ENCODE measurements at regions of chr1 and their contacts with region 1.

Region 1: GRCh38 chr1:183915625-183916510 is 110.9 kb downstream of the RGL1 start:
- DNase-seq: peak; percentile 97
- H3K4me3 ChIP-seq: no peak overlapping the region
- H3K27ac ChIP-seq: peak overlapping the region; percentile 59
- H3K4me1 ChIP-seq: peaks cover 32% of the 10 kb centered on the region
- H3K27me3 ChIP-seq: no peaks in the 10 kb centered on the region
- CTCF ChIP-seq: peak; percentile 68 to 74
- POLR2A ChIP-seq: peak; percentile 54

Region 2: GRCh38 chr1:183471743-183472487 is 444.0 kb before region 1 on chr1:
- CTCF ChIA-PET with region 1: no interaction called
- POLR2A ChIA-PET with region 1: no interaction called
- dilution Hi-C with region 1: no loop called
- intact Hi-C with region 1: loop called (anchors 1 kb)
- DNase-seq: peak; percentile 96
- H3K4me3 ChIP-seq: peak overlapping the region; percentile 62 to 91 (median 89)
- H3K27ac ChIP-seq: peak overlapping the region; percentile 90
- H3K4me1 ChIP-seq: peaks cover 19% of the 10 kb centered on the region
- H3K27me3 ChIP-seq: no peaks in the 10 kb centered on the region
- CTCF ChIP-seq: peak in 1 of 2 donors; percentile 11
- POLR2A ChIP-seq: no peak

Region 3: DNA sequence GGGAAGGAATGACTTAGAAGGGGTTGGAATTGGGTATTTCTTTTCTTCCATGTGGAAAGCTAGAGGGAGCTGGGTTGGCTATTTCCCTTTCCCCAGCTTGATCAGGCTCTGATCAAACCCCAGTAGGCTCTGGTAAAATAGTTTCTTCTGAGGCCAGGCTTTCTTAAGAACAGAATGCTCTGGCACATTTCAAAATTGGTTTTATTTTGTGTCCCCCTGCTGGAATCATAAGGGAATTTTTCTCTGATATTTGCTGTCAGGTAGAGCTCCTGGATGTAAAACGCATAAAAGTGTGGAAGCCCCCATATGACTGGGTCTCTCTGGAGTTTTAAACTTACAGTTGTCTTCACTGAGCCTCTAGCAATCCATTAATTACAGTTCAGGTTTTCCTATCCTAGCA is 245.7 kb before region 1 on chr1:
- CTCF ChIA-PET with region 1: interaction called, 15 read pairs
- POLR2A ChIA-PET with region 1: no interaction called
- dilution Hi-C with region 1: no loop called
- intact Hi-C with region 1: no loop called
- DNase-seq: no peak
- H3K4me3 ChIP-seq: no peak overlapping the region
- H3K27ac ChIP-seq: no peak overlapping the region
- H3K4me1 ChIP-seq: no peaks in the 10 kb centered on the region
- H3K27me3 ChIP-seq: no peaks in the 10 kb centered on the region
- CTCF ChIP-seq: peak in 1 of 2 donors; percentile 5
- POLR2A ChIP-seq: no peak

Region 4: GRCh38 chr1:183757061-183757460 is 158.8 kb before region 1 on chr1:
- CTCF ChIA-PET with region 1: interaction called, 10 read pairs
- POLR2A ChIA-PET with region 1: no interaction called
- dilution Hi-C with region 1: no loop called
- intact Hi-C with region 1: no loop called
- DNase-seq: peak; percentile 55
- H3K4me3 ChIP-seq: no peak overlapping the region
- H3K27ac ChIP-seq: peak overlapping the region; percentile 32
- H3K4me1 ChIP-seq: peaks cover 18% of the 10 kb centered on the region
- H3K27me3 ChIP-seq: no peaks in the 10 kb centered on the region
- CTCF ChIP-seq: no peak
- POLR2A ChIP-seq: no peak

Region 5: DNA sequence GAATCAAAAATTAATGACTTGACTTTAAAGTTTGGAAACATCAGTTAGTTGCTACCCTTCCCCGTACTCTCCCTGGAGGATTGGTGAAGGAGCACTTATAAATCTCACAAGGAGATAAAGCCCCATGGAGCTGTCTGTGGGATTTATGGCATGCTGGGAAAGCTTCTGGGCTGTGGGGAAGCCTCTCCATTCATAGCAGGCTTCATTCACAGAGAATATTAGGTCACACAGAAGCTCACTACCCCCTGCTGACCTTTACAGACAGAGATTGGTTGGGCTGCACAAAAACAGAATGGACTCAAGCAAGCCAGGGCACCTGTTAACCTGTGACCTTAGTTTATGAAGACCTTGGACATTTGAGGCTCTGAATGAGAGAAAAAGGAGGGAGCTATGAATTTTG is 78.8 kb before region 1 on chr1:
- CTCF ChIA-PET with region 1: interaction called, 19 read pairs
- POLR2A ChIA-PET with region 1: no interaction called
- dilution Hi-C with region 1: no loop called
- intact Hi-C with region 1: loop called (anchors 2 kb)
- DNase-seq: no peak
- H3K4me3 ChIP-seq: no peak overlapping the region
- H3K27ac ChIP-seq: no peak overlapping the region
- H3K4me1 ChIP-seq: peaks cover 35% of the 10 kb centered on the region
- H3K27me3 ChIP-seq: no peaks in the 10 kb centered on the region
- CTCF ChIP-seq: no peak
- POLR2A ChIP-seq: no peak

Region 6: GRCh38 chr1:183881387-183882131 is 34.3 kb before region 1 on chr1:
- CTCF ChIA-PET with region 1: interaction called, 36 read pairs
- POLR2A ChIA-PET with region 1: no interaction called
- dilution Hi-C with region 1: no loop called
- intact Hi-C with region 1: loop called (anchors 2 kb)
- DNase-seq: peak; percentile 98
- H3K4me3 ChIP-seq: no peak overlapping the region
- H3K27ac ChIP-seq: peak overlapping the region; percentile 77
- H3K4me1 ChIP-seq: peaks cover 43% of the 10 kb centered on the region
- H3K27me3 ChIP-seq: no peaks in the 10 kb centered on the region
- CTCF ChIP-seq: no peak
- POLR2A ChIP-seq: peak; percentile 56

Region 7: DNA sequence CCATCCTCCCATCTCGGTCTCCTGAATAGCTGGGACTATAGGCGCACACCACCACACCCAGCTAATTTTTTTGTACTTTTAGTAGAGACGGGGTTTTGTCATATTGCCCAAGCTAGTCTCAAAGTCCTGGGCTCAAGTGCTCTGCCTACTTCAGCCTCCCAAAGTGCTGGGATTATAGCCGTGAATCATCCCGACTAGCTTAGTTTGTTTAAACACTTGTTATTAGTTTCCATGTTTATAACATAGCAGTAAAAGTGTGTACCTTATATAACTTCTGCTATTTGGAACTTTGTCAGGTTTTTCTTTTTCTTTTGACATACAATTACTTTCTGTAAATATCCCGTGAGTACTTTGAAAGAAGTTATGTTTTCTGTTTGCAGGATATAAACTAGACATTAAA is 410.4 kb after region 1 on chr1:
- CTCF ChIA-PET with region 1: no interaction called
- POLR2A ChIA-PET with region 1: no interaction called
- dilution Hi-C with region 1: no loop called
- intact Hi-C with region 1: no loop called
- DNase-seq: no peak
- H3K4me3 ChIP-seq: no peak overlapping the region
- H3K27ac ChIP-seq: no peak overlapping the region
- H3K4me1 ChIP-seq: peaks cover 22% of the 10 kb centered on the region
- H3K27me3 ChIP-seq: no peaks in the 10 kb centered on the region
- CTCF ChIP-seq: no peak
- POLR2A ChIP-seq: no peak

Region 8: DNA sequence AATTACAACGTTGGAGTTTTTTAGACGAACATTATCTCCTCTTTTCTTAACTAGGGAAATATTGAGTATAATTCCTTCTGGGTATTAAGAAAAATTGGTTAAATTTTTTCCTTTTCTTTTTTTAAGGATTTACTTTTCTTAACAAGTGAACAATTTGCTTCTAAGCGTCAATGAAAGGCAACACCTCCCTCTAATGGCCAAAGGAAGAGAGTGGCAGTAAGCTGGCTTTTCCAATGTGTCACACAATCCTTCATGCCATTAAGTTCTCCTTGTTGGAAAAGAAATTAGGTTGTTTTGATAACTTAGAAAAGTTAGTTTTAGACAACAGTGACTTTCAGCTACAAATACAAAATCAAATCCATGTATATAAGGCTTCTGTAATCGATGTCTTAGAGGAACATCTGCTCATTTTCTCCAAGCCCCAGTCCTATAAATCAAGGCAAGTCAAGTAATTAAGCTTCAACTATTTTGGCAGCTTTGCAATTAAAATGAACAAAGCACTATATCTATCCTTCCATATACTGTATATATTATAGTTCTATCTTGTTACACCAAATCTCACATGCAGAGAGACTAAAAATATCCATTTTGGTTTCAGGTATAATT is 776.0 kb after region 1 on chr1:
- CTCF ChIA-PET with region 1: interaction called, 10 read pairs
- POLR2A ChIA-PET with region 1: no interaction called
- dilution Hi-C with region 1: no loop called
- intact Hi-C with region 1: no loop called
- DNase-seq: peak; percentile 67
- H3K4me3 ChIP-seq: no peak overlapping the region
- H3K27ac ChIP-seq: no peak overlapping the region
- H3K4me1 ChIP-seq: no peaks in the 10 kb centered on the region
- H3K27me3 ChIP-seq: no peaks in the 10 kb centered on the region
- CTCF ChIP-seq: peak; percentile 52 to 61
- POLR2A ChIP-seq: no peak

Measured in endothelial cell of umbilical vein (primary cell).